OCI-LY7 (cell line): ENCODE measurements at regions of chr17 and their contacts with region 1.

Region 1: GRCh38 chr17:43940630-43941029 is 1.6 kb downstream of the PPY start:
- DNase-seq: peak; percentile 44
- H3K4me3 ChIP-seq: no peak overlapping the region
- H3K27ac ChIP-seq: no peak overlapping the region
- H3K4me1 ChIP-seq: no peaks in the 10 kb centered on the region
- CTCF ChIP-seq: peak; percentile 66

Region 2: GRCh38 chr17:43994272-43995149 is 53.9 kb after region 1 on chr17:
- CTCF ChIA-PET with region 1: interaction called, 3 read pairs
- POLR2A ChIA-PET with region 1: no interaction called
- intact Hi-C with region 1: loop called (anchors 1 kb)
- DNase-seq: peak; percentile 52
- H3K4me3 ChIP-seq: no peak overlapping the region
- H3K27ac ChIP-seq: no peak overlapping the region
- H3K4me1 ChIP-seq: no peaks in the 10 kb centered on the region
- CTCF ChIP-seq: peak; percentile 84

Region 3: DNA sequence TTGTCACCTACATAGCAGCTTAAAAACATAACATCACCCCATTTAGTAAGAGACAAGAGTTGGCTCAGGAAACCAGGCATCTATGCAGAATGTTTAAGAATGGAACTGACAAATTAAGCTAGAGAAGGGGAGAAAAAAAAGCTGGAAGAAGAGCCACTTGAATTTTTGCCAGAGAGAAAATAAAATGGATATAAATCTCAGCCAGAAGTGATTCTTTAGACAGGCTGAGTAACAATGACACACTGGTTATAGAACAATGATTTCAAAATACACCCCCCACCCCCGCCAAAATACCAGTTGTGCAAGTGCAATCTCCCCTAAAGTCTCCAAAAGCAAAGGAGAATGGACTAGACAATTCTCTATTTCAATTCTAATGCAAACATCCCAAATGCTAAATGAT is 103.4 kb after region 1 on chr17:
- CTCF ChIA-PET with region 1: no interaction called
- POLR2A ChIA-PET with region 1: no interaction called
- intact Hi-C with region 1: loop called (anchors 1 kb)
- DNase-seq: no peak
- H3K4me3 ChIP-seq: no peak overlapping the region
- H3K27ac ChIP-seq: no peak overlapping the region
- H3K4me1 ChIP-seq: no peaks in the 10 kb centered on the region
- CTCF ChIP-seq: no peak

Region 4: DNA sequence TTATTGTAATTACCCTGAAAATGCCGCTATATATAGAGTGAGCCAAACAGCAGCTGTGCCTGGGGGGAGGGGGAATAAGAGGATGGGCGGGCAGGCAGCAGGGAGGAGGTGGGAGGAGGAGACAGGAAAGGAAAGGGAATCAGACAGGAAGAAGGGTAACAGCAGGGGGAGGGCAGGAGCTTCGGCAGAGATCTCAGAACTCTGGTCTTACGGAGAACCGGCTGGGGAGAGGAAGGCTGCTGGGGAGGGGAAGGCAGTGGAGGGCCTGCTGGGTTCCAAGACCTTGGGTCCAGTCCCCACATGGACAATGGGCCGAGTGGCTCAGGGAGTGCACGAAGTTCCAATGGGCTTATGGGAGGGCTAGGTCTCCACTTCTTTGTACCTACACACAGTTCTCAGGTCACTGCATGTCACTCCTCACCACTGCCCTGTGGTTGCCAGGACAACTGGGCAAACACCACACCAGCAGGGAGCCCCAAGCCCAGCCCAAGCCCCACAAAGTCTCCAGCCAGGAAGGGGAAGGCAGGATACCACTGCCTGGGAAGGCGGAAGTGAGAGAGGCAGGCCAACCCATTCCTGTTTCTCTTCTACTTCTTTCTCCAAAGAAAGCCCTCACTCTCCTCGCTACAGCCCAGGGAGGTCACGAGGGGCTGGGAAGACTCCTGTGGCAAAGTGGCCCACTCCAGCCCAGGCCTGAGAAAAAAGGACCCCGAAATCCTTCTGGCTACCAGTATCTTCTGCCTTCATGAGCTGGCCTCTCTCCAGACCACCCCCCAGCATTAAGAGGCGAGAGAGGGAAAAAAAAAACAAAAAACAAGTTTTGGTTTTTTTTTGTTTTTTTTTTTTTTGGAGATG is 155.2 kb after region 1 on chr17:
- CTCF ChIA-PET with region 1: no interaction called
- POLR2A ChIA-PET with region 1: no interaction called
- intact Hi-C with region 1: loop called (anchors 5 kb)
- DNase-seq: no peak
- H3K4me3 ChIP-seq: no peak overlapping the region
- H3K27ac ChIP-seq: no peak overlapping the region
- H3K4me1 ChIP-seq: peaks cover 14% of the 10 kb centered on the region
- CTCF ChIP-seq: no peak

Region 5: GRCh38 chr17:44170499-44171201 is 230.0 kb after region 1 on chr17 and contains the start of gene ASB16:
- CTCF ChIA-PET with region 1: no interaction called
- POLR2A ChIA-PET with region 1: no interaction called
- intact Hi-C with region 1: loop called (anchors 2 kb)
- DNase-seq: no peak
- H3K4me3 ChIP-seq: no peak within 1 kb of the TSS
- H3K27ac ChIP-seq: no peak within 1 kb of the TSS
- H3K4me1 ChIP-seq: peaks cover 26% of the 10 kb centered on the region
- CTCF ChIP-seq: no peak
- total RNA-seq, gene ASB16: 0.44 and 0.57 TPM in 2 replicates

Region 6: DNA sequence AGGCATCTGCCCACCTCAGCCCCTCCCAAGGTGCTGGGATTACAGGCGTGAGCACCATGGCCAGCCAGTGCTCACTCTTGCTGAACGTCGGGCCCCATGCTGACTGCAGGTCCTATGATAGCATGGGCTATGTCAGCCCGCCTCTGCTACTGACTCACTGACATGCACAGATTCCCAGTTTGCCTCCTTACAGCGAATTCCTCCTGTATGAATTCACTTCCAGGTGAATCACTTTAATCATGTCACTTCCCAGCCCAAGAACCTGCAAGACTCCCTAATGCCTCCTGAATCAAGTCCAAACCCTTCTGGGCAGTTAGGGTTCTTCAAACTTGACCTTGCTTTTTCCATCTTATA is 294.9 kb after region 1 on chr17:
- CTCF ChIA-PET with region 1: no interaction called
- POLR2A ChIA-PET with region 1: no interaction called
- intact Hi-C with region 1: no loop called
- DNase-seq: no peak
- H3K4me3 ChIP-seq: no peak overlapping the region
- H3K27ac ChIP-seq: no peak overlapping the region
- H3K4me1 ChIP-seq: no peaks in the 10 kb centered on the region
- CTCF ChIP-seq: no peak